ENCODE measurements at regions of chr14 and their contacts with region 1.

Region 1: GRCh38 chr14:88181072-88181471 is 142.0 kb downstream of the KCNK10 start:
- DNase-seq: no peak
- H3K4me3 ChIP-seq: no peak overlapping the region
- H3K27ac ChIP-seq: no peak overlapping the region
- H3K4me1 ChIP-seq: no peaks in the 10 kb centered on the region
- H3K27me3 ChIP-seq: no peaks in the 10 kb centered on the region
- CTCF ChIP-seq: no peak
- EP300 ChIP-seq: no peak
- POLR2A ChIP-seq: no peak

Region 2: GRCh38 chr14:87944987-87945604 is 236.0 kb before region 1 on chr14:
- in situ Hi-C with region 1: loop called in 1 of 4 experiments (anchors 10 kb)
- intact Hi-C with region 1: no loop called
- DNase-seq: no peak
- H3K4me3 ChIP-seq: no peak overlapping the region
- H3K27ac ChIP-seq: no peak overlapping the region
- H3K4me1 ChIP-seq: no peaks in the 10 kb centered on the region
- H3K27me3 ChIP-seq: no peaks in the 10 kb centered on the region
- CTCF ChIP-seq: peak; percentile 62 to 68 (median 67)
- EP300 ChIP-seq: no peak
- POLR2A ChIP-seq: no peak

Region 3: DNA sequence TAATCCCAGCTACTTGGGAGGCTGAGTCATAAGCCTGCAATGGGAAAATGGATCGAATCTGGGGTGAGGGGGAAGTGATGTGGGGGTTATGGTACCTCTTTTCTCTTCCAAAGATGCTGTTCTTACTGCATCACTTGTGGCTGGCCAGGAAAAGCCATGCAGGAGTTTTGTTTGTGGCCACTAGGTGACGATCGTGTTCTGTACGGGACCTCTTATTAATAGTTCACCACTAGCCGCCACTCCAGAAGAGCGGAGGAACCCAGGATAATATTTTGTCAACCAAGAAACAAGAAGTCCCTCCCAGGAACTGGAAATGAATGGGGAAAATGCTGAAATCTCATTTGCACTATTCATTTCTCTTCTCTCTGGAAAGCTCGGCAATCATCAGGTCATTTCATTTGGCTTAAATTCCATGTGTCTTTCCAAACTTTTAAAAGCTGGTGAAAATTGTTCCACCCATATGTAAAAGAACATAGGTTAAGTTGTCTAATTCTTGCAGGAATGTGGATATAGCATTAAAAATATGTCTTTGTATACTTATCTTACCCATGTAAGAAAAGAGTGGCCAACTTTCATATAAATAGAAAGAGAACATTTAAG is 167.2 kb before region 1 on chr14:
- in situ Hi-C with region 1: loop called in 1 of 4 experiments (anchors 10 kb)
- intact Hi-C with region 1: no loop called
- DNase-seq: peak; percentile 63
- H3K4me3 ChIP-seq: no peak overlapping the region
- H3K27ac ChIP-seq: no peak overlapping the region
- H3K4me1 ChIP-seq: no peaks in the 10 kb centered on the region
- H3K27me3 ChIP-seq: no peaks in the 10 kb centered on the region
- CTCF ChIP-seq: peak; percentile 88 to 95 (median 90)
- EP300 ChIP-seq: no peak
- POLR2A ChIP-seq: no peak

Region 4: GRCh38 chr14:88168498-88169165 is 12.4 kb before region 1 on chr14:
- in situ Hi-C with region 1: no loop called
- intact Hi-C with region 1: loop called (anchors 1 kb)
- DNase-seq: peak; percentile 51
- H3K4me3 ChIP-seq: no peak overlapping the region
- H3K27ac ChIP-seq: no peak overlapping the region
- H3K4me1 ChIP-seq: peaks cover 0 to 4% (median 0%) of the 10 kb centered on the region in 4 donors
- H3K27me3 ChIP-seq: no peaks in the 10 kb centered on the region
- CTCF ChIP-seq: peak; percentile 54 to 75 (median 66)
- EP300 ChIP-seq: no peak
- POLR2A ChIP-seq: no peak